ENCODE measurements at regions of chr12 and their contacts with region 1.

Region 1: DNA sequence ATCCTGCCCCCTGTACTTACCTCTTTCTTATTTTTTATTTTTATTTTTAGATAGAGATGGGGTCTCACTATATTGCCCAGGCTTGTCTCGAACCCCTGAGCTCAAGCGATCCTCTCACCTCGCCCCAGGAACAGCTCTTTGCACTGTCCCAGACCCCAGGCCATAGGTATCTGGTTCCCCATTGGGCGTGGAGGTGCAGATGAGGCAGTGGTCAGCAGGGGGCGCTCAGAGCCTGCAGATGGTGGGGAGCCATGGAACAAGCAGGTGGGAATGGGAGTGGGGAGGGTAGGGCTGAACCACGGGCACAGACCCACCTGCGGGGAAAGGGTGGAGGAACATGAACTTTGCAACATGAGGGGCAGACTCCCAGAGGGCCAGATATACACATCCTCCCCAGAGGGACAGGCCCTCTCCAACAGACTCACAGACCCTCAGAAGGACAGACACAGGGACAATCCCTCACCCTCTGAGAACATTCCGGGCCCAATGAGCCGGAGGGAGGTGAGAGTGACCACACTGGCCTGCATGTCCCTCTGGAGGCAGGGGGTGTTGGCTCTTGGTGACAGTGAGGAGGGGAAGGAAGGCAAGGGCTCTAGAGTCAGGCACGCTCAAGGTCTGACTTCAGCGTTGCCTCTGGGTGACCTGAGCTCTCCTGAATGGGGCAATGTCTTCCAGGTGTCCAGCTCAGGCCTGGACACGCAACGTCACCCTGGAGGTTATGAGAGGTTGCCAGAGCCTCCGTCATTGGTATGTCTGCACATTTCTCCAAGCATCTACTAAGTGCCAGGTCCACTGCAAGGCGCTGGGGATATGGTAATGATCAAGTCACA is 34.9 kb downstream of the KRT80 start:
- DNase-seq: peak; percentile 75 to 90 (median 89)
- ATAC-seq: peak; percentile 61 to 67
- H3K4me3 ChIP-seq: no peak overlapping the region
- H3K27ac ChIP-seq: no peak overlapping the region
- H3K4me1 ChIP-seq: no peaks in the 10 kb centered on the region
- H3K27me3 ChIP-seq: no peaks in the 10 kb centered on the region

Region 2: GRCh38 chr12:52050761-52051541 is 106.0 kb before region 1 on chr12 and contains the start of gene NR4A1:
- intact Hi-C with region 1: no loop called
- DNase-seq: peak; percentile 99 to 100 (median 100)
- ATAC-seq: peak; percentile 87 to 94
- H3K4me3 ChIP-seq: peak within 1 kb of the TSS; percentile 72
- H3K27ac ChIP-seq: peak within 1 kb of the TSS; percentile 97
- H3K4me1 ChIP-seq: peaks cover 26% of the 10 kb centered on the region
- H3K27me3 ChIP-seq: no peaks in the 10 kb centered on the region
- total RNA-seq, gene NR4A1: 50.2 to 238 (median 85.2) TPM

Region 3: DNA sequence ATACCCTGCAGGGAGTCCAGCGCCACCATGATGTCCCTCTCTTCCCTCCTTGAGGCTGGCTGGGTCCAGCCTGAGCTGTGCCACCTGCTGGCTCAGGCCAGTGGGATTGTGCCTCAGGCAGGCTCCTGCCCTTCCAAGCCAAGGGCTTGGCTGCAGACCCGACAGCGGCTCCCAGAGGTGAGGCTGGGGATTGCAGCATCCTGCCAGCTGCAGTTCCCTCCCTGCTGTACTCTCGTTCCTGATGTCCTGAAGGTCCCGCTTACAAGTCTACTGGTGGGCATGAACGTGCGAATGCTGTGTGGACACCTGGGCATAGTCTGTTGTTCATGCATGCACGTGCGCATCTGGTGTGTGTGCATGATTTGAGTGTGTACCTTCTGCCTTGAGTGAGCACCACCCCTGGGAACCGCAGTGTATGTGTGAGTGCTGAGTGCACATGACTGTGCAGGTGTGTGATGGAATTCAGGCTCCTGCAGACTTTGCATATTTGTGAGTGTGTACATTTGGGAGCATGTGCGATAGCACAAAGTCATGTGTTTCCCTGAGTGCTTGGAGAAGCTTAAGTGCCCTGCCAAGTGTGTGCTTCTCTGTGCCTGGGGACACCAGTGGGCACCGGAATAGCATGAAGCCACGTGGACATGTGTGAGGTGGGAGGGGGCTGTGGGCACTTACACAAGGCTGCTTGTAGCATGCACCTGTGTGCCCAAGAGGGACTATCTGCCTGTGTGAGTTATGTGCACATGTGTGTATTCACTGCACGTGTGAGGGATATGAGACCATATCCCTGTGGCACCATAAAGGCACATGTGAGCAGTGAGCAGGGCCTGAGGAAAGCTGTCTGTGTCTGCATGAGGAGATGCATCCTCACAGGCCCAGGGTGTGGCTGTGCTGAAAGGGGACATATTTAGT is 56.8 kb after region 1 on chr12:
- intact Hi-C with region 1: loop called in 1 of 4 experiments (anchors 2 kb)
- DNase-seq: peak; percentile 66 to 90 (median 85)
- ATAC-seq: peak; percentile 73 to 82
- H3K4me3 ChIP-seq: no peak overlapping the region
- H3K27ac ChIP-seq: no peak overlapping the region
- H3K4me1 ChIP-seq: no peaks in the 10 kb centered on the region
- H3K27me3 ChIP-seq: no peaks in the 10 kb centered on the region

Region 4: DNA sequence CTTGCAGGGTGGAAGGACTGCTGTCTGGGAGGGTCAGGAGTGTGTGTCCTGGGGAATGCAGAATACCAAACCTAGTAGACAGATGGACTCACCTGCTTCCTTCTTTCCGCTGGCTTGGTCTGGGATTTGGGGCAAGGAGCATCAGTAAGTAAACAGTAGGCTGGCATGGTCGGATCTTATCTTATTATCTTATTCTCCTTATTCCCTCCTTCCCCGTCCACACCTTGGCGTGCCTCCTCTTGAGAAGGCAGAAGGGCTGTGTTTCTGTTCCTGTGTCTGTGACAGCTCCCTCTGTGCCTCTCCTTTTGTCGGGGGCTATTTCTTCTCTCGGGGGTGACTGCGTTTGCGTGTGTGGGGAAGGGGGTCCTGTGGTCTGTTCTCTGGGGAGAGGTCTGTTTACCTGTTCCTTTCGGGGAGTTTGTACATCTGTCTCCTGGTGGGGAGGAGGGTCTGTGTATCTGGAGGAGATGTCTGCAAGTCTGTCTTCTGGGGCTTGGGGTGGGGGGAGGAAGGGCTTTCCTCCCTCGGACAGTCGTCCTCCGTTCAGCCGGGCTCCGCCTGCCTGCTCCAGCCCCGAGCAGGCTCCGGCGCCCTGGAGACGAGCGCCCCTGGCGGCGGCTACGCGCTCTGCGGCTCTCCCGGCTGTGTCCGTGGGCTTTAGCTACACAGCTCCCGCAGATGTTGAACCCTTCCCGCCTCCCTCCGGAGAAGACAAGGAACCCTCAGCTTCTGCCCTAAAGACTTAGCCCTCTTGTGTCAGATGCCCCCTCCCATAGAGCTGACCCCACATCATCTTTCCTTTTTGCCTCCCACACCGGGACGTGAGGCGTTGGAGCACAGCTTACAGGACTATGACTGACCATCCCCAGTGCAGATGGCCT is 121.8 kb after region 1 on chr12:
- intact Hi-C with region 1: loop called in 2 of 4 experiments (anchors 2 to 5 kb)
- DNase-seq: peak; percentile 71 to 91 (median 91)
- ATAC-seq: peak; percentile 91 to 92
- H3K4me3 ChIP-seq: no peak overlapping the region
- H3K27ac ChIP-seq: no peak overlapping the region
- H3K4me1 ChIP-seq: no peaks in the 10 kb centered on the region
- H3K27me3 ChIP-seq: no peaks in the 10 kb centered on the region

Region 5: GRCh38 chr12:52311285-52311648 is 154.3 kb after region 1 on chr12:
- intact Hi-C with region 1: no loop called
- DNase-seq: no peak
- ATAC-seq: peak; percentile 25 to 63
- H3K4me3 ChIP-seq: no peak overlapping the region
- H3K27ac ChIP-seq: no peak overlapping the region
- H3K4me1 ChIP-seq: no peaks in the 10 kb centered on the region
- H3K27me3 ChIP-seq: no peaks in the 10 kb centered on the region

Region 6: DNA sequence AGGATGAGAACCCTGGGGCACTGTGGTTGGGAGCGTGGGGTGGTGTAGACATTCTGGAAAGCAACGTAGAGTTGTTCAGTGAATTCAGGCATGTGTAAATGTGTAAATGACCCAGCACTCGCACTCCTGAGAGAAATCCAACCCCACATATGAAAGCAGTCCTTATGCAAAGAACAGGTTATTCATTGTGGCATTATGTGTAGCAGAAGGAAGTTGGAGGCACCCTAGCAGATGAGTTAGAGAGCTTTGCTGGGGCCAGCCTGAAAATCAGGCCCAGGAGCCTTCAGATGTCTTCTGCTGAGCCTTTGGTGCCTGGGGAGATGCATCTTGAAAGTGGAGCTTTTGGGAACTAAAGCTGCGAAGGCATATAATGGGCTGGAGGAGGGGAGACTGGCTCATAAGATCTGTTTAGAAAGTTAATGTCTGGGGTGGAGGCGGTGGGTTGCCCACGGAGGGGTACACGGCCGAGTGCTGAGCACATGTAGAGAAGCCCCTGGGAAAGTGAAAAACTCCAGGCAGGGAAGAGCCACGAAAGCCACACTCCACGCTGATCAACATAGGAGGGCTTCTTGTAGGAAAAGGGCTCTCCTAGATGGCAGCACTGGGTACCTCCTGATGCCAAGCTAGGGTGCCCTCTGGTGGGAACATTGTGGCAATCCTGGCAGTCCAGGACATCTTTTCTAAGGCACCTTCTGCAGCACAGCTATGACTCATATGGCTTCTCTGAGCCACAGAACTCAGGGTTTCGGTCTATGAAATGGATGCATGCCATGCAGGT is 170.3 kb after region 1 on chr12:
- intact Hi-C with region 1: loop called (anchors 2 to 5 kb)
- DNase-seq: peak; percentile 70 to 81 (median 80)
- ATAC-seq: peak; percentile 82
- H3K4me3 ChIP-seq: no peak overlapping the region
- H3K27ac ChIP-seq: no peak overlapping the region
- H3K4me1 ChIP-seq: no peaks in the 10 kb centered on the region
- H3K27me3 ChIP-seq: no peaks in the 10 kb centered on the region

Region 7: GRCh38 chr12:52879394-52880351 is 722.7 kb after region 1 on chr12:
- intact Hi-C with region 1: loop called in 3 of 4 experiments (anchors 2 to 10 kb)
- DNase-seq: peak; percentile 76 to 91 (median 89)
- ATAC-seq: peak; percentile 86
- H3K4me3 ChIP-seq: no peak overlapping the region
- H3K27ac ChIP-seq: no peak overlapping the region
- H3K4me1 ChIP-seq: no peaks in the 10 kb centered on the region
- H3K27me3 ChIP-seq: no peaks in the 10 kb centered on the region

Region 8: DNA sequence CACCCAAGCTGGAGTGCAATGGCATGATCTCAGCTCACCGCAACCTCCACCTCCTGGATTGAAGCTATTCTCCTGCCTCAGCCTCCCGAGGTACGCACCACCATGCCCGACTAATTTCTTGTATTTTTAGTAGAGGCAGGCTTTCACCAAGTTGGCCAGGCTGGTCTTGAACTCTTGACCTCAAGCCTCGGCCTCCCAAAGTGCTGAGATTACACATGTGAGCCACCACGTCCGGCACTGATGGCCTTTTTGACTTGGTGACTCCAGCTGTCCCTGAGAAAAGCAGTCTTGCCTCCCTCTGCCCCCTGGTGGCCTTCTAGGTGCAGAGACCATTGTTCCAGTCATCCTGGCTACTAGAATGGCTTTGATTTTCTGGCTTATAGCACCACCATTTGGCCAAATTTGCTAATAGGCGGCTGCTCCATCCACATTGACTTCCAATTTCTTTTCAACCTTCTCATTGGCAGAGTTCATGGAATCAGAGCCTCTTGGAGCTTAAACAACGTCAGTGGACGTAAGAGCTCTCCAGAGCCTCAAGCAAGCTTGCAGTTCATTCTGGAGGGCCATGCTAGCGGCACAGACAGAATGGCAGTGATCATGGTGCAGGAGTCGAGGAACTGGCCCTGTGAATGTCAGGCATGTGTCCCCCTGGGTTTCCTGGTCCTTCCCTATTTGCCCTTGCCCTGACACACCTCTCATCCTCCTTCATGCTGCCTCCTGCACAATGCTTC is 823.9 kb after region 1 on chr12:
- intact Hi-C with region 1: loop called in 1 of 4 experiments (anchors 10 kb)
- DNase-seq: peak; percentile 90 to 95 (median 91)
- ATAC-seq: peak; percentile 90 to 91
- H3K4me3 ChIP-seq: no peak overlapping the region
- H3K27ac ChIP-seq: no peak overlapping the region
- H3K4me1 ChIP-seq: no peaks in the 10 kb centered on the region
- H3K27me3 ChIP-seq: no peaks in the 10 kb centered on the region